Heart left ventricle (tissue), 16 donors: ENCODE measurements at regions of chr2 and their contacts with region 1.

Region 1: GRCh38 chr2:67476809-67477790 is 80.0 kb downstream of the ETAA1 start:
- DNase-seq: no peak
- ATAC-seq: peak in 3 of 4 donors; percentile 61 to 67 (median 65)
- H3K4me3 ChIP-seq: no peak overlapping the region
- H3K27ac ChIP-seq: no peak overlapping the region
- H3K4me1 ChIP-seq: peaks cover 0 to 6% (median 0%) of the 10 kb centered on the region in 12 donors
- H3K27me3 ChIP-seq: no peaks in the 10 kb centered on the region
- CTCF ChIP-seq: peak; percentile 13 to 60 (median 40)
- POLR2A ChIP-seq: no peak

Region 2: GRCh38 chr2:66587216-66587615 is 889.9 kb before region 1 on chr2:
- intact Hi-C with region 1: loop called in 2 of 10 experiments (anchors 10 kb)
- DNase-seq: no peak
- ATAC-seq: no peak
- H3K4me3 ChIP-seq: no peak overlapping the region
- H3K27ac ChIP-seq: no peak overlapping the region
- H3K4me1 ChIP-seq: peaks cover 0 to under 1% (median 0%) of the 10 kb centered on the region in 12 donors
- H3K27me3 ChIP-seq: peaks cover 3 to 58% (median 26%) of the 10 kb centered on the region in 9 donors
- CTCF ChIP-seq: peak in 1 of 12 donors; percentile 28
- POLR2A ChIP-seq: no peak

Region 3: DNA sequence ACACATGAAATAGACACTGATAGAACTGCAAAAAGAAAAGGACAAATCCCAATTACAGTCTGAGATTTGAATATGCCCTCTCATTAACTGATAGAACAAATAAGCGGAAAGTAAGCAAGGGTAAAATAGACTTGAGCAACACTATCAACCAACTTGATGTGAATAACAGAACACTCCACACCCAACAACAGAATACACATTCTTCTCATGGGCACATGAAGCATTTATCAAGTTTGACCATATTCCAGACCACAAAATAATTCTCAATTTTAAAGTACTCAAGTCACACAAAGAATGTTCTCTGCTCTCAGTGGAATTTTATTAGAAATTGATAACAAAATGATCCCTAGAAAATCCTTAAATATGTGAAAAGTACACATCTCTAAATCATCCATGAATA is 61.0 kb before region 1 on chr2:
- intact Hi-C with region 1: no loop called
- DNase-seq: no peak
- ATAC-seq: no peak
- H3K4me3 ChIP-seq: no peak overlapping the region
- H3K27ac ChIP-seq: no peak overlapping the region
- H3K4me1 ChIP-seq: no peaks in the 10 kb centered on the region
- H3K27me3 ChIP-seq: no peaks in the 10 kb centered on the region
- CTCF ChIP-seq: no peak
- POLR2A ChIP-seq: no peak